Activated naive CD4-positive, alpha-beta T cell treated with anti-CD3 and anti-CD28 coated beads for 36 hours (primary cell): ENCODE measurements at regions of chr3 and their contacts with region 1.

Region 1: GRCh38 chr3:119819806-119820205 is 37.9 kb downstream of the NR1I2 start:
- DNase-seq: no peak
- H3K4me3 Mint-ChIP-seq: no peak overlapping the region
- H3K27ac Mint-ChIP-seq: no peak overlapping the region
- H3K4me1 Mint-ChIP-seq: peaks cover 4% of the 10 kb centered on the region
- H3K27me3 Mint-ChIP-seq: no peaks in the 10 kb centered on the region

Region 2: DNA sequence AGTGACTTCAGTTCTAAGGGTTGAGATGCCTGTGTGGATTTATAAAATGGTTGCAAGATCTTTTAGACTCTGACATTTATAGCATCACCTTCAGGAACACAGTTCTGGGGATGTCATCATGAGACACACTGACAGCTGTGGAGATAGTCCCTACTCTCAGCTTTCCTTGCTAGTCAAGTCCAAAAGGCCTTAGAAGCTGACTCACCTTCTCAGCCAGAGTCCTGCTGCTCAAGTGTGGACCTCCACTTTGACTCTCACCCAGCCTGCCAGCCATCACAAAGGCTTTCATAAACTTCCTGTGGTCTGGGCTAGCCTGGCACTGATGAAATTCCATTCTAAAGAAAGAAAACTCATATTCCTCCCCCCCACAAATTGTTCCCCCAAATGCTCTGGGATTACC is 401.2 kb before region 1 on chr3:
- CTCF ChIA-PET with region 1: no interaction called
- intact Hi-C with region 1: no loop called
- DNase-seq: no peak
- H3K4me3 Mint-ChIP-seq: no peak overlapping the region
- H3K27ac Mint-ChIP-seq: no peak overlapping the region
- H3K4me1 Mint-ChIP-seq: no peaks in the 10 kb centered on the region
- H3K27me3 Mint-ChIP-seq: no peaks in the 10 kb centered on the region

Region 3: GRCh38 chr3:119849126-119849525 is 29.3 kb after region 1 on chr3:
- CTCF ChIA-PET with region 1: no interaction called
- intact Hi-C with region 1: no loop called
- DNase-seq: no peak
- H3K4me3 Mint-ChIP-seq: no peak overlapping the region
- H3K27ac Mint-ChIP-seq: no peak overlapping the region
- H3K4me1 Mint-ChIP-seq: no peaks in the 10 kb centered on the region
- H3K27me3 Mint-ChIP-seq: no peaks in the 10 kb centered on the region

Region 4: DNA sequence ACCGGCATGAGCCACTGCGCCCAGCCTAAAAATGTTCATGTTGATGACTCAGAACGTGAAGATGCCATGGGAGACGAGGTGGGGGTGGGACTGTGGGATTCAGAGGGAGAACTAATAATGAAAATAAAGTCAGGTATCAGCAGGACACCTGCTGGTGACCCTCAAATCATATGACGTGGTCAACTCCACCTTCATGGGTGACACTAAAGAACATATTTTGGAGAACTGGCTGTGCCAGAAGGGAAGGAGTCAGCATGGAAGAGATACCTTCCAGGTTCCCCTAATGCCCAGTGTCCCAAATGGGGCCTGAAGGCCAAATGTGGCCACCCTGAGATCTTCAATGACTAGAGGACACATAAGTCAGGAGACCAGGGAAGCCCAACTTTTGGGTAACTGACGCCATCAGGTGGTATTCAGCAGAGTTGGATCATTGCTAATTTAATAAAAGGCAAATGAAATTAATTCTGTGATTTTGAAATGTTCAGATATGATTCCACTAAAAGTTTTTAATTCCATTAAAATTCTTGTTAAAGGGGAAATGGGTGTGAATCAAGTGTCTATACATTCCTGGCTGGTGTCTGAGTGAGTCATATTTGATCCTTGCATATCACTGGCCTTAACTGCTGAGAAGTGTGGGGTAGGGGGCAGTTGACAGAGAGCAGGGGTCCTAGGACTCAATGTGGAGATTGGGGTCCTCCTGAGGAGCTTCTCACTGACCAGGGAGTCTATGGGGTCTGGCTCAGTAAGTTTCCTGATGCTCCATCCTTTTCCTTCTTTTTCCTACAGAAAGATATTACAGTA is 363.1 kb after region 1 on chr3:
- CTCF ChIA-PET with region 1: interaction called, 3 read pairs
- intact Hi-C with region 1: loop called (anchors 1 kb)
- DNase-seq: peak; percentile 26
- H3K4me3 Mint-ChIP-seq: no peak overlapping the region
- H3K27ac Mint-ChIP-seq: no peak overlapping the region
- H3K4me1 Mint-ChIP-seq: no peaks in the 10 kb centered on the region
- H3K27me3 Mint-ChIP-seq: no peaks in the 10 kb centered on the region

Region 5: GRCh38 chr3:120198305-120198878 is 378.6 kb after region 1 on chr3:
- CTCF ChIA-PET with region 1: no interaction called
- intact Hi-C with region 1: loop called (anchors 1 kb)
- DNase-seq: peak; percentile 19
- H3K4me3 Mint-ChIP-seq: no peak overlapping the region
- H3K27ac Mint-ChIP-seq: no peak overlapping the region
- H3K4me1 Mint-ChIP-seq: no peaks in the 10 kb centered on the region
- H3K27me3 Mint-ChIP-seq: no peaks in the 10 kb centered on the region

Region 6: DNA sequence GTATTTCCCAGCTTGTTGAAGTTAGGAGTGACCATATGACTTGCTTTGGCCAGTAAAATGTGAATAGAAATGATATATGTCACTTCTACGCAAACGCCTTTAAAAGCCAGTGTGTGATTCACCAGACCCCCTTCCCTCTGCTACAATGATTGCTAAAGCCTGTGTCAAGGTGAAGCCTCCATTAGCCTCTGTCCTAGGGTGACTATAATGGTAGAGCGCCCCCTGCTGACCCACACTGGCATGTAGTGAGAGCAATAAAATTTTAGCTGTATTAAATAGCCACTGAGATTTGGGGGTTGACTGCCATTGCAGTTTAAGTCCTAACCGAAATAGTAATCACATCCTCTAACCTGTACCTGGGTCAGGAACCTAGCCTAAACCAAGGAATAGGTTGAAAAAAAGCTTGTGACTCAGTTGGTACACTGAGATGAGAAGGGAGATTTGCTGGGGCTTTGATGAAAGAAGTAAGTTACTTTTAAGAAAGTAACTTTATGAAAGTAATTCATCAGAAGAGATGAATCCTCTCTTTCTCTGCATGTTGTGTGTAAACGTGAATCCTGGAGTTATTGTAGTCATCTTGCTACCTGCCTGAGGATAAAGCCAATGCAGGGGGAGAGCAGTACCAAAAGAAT is 975.3 kb after region 1 on chr3:
- CTCF ChIA-PET with region 1: no interaction called
- intact Hi-C with region 1: no loop called
- DNase-seq: peak; percentile 93
- H3K4me3 Mint-ChIP-seq: no peak overlapping the region
- H3K27ac Mint-ChIP-seq: no peak overlapping the region
- H3K4me1 Mint-ChIP-seq: peaks cover 11% of the 10 kb centered on the region
- H3K27me3 Mint-ChIP-seq: peaks cover 3% of the 10 kb centered on the region